ENCODE measurements at regions of chr22 and their contacts with region 1.

Region 1: GRCh38 chr22:22959147-22959827 is 71.7 kb downstream of the IGLL5 start:
- DNase-seq: peak in 1 of 2 donors; percentile 59
- H3K4me3 ChIP-seq: no peak overlapping the region
- CTCF ChIP-seq: peak in 1 of 3 donors; percentile 67
- POLR2A ChIP-seq: no peak

Region 2: GRCh38 chr22:22487869-22488597 is 471.3 kb before region 1 on chr22:
- intact Hi-C with region 1: no loop called
- DNase-seq: no peak
- H3K4me3 ChIP-seq: no peak overlapping the region
- CTCF ChIP-seq: no peak
- POLR2A ChIP-seq: no peak

Region 3: DNA sequence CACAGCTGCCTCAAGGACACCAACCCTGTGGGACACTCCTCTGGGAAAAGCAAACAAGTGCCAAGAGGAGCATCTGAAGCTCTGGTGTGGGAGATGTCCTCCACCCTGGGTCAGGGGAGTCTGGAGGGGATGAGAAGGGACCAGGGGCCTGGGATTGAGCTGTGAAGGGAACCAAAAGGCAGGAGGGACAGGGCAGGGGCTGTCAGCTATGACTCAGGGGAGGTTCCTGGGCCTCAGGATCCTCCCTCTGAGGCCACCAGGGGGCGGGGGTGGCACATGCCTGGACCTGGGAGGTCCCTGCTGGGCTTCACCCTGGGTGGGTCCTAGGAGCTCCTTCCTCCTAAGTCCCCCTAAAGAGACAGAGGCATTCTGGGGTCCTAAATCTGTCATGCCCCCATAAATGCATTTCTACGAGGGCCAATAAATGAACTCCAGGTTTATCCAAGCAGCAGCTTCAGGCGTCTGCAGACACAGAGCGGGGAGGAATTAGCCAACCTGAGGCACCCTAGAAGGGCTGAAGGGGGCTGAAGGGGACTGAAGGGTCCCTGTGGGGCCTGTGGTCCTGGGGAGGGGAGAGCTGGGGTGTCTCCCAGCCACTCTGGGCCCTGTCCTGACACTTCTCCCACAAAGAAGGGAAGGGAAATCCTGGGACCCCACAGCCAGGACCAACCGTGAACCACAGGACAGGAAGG is 103.5 kb before region 1 on chr22:
- intact Hi-C with region 1: loop called (anchors 10 kb)
- DNase-seq: no peak
- H3K4me3 ChIP-seq: no peak overlapping the region
- CTCF ChIP-seq: no peak
- POLR2A ChIP-seq: no peak

Region 4: GRCh38 chr22:22884010-22884887 is 75.0 kb before region 1 on chr22:
- intact Hi-C with region 1: no loop called
- DNase-seq: peak; percentile 51 to 80
- H3K4me3 ChIP-seq: no peak overlapping the region
- CTCF ChIP-seq: no peak
- POLR2A ChIP-seq: no peak

Region 5: DNA sequence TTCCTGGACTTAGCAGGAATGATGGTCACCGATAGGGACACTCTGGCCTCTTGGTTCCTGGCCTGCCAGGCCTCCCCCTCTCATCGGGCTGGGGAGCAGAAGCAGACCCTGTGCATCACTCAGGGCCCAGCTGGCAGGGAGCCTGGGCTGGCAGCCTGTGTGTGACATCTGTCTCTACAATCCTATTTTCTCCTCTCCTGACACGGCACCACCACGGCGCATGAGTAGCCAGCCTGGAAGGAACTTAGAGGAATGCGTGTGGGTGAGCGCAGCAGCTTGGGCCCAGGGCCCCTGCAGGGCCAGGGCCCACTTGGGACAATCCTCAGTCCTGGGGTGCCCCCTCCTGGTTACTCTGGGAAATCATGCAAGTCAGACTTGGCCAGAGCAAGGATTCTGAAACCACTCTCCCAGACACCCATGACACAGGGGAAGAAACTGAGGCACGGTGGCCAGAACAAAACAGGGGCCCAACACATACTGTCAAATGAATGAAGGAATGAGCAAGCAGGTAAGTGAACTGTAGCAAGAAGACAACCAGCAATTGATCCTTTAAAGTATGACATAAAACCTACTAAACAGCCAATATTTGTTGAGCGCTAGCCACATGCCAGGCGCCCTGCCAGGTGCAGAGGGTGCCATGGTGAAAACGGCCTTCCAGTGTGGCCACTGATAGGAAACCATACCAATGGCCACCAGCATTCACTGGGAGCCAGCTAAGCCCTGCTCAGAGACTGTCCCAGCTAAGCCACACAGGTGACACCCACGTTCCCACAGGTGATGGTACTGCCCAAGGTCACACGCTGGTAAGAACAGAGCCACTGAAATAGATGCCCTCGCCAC is 169.2 kb after region 1 on chr22:
- intact Hi-C with region 1: loop called (anchors 5 kb)
- DNase-seq: peak; percentile 35 to 91
- H3K4me3 ChIP-seq: no peak overlapping the region
- CTCF ChIP-seq: no peak
- POLR2A ChIP-seq: no peak

Region 6: DNA sequence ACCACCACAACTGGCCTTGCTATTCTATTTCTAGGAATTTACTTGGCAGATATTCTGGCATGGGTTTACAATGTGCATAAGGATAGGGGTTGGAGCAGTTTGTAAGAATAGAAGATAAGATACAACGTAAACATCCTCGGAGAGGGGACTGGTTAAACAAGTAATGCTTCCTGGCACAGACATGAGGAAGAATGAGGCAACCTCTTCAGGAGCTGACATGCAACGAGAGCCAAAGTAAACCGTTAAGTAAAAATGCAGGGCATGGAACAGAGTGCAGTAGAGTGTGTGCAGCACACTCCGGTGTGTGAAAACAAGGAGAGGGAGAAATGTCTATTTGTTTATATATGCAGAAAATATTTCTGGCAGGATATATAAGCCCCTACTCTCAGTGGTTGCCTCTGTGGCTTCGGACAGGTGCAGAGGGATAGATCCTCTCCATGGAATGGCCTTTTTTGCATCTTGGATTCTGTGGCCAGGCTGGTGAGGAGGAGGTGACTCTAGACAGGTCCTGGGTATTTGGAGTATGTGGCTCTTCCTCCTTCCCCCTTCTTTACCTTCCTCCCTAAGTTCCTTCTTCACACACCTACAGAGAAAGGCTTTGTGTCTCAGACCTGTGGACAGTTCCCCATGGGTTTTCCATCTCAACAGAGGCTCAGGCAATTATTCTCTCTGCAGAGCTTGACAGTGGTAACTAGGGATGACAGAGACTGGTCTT is 188.5 kb after region 1 on chr22:
- intact Hi-C with region 1: no loop called
- DNase-seq: peak in 1 of 2 donors; percentile 30
- H3K4me3 ChIP-seq: no peak overlapping the region
- CTCF ChIP-seq: no peak
- POLR2A ChIP-seq: no peak

Measured in lower leg skin (tissue), 4 donors.